ENCODE measurements at regions of chr9 and their contacts with region 1.

Region 1: GRCh38 chr9:128733256-128733655 is 9.3 kb upstream of the ZDHHC12 start:
- DNase-seq: peak; percentile 88
- H3K4me3 ChIP-seq: no peak overlapping the region
- H3K27ac ChIP-seq: no peak overlapping the region
- H3K4me1 ChIP-seq: no peaks in the 10 kb centered on the region
- H3K27me3 ChIP-seq: no peaks in the 10 kb centered on the region
- CTCF ChIP-seq: peak; percentile 75 to 85
- POLR2A ChIP-seq: no peak

Region 2: GRCh38 chr9:128786681-128787601 is 53.7 kb after region 1 on chr9 and contains the start of gene TBC1D13:
- CTCF ChIA-PET with region 1: interaction called, 6 read pairs
- POLR2A ChIA-PET with region 1: no interaction called
- dilution Hi-C with region 1: no loop called
- intact Hi-C with region 1: loop called (anchors 5 kb)
- DNase-seq: peak; percentile 82
- H3K4me3 ChIP-seq: peak within 1 kb of the TSS; percentile 50 to 94 (median 77)
- H3K27ac ChIP-seq: no peak within 1 kb of the TSS
- H3K4me1 ChIP-seq: peaks cover 11% of the 10 kb centered on the region
- H3K27me3 ChIP-seq: no peaks in the 10 kb centered on the region
- CTCF ChIP-seq: no peak
- POLR2A ChIP-seq: peak; percentile 66
- total RNA-seq, gene TBC1D13: 34.9 and 35.1 TPM in 2 replicates

Region 3: GRCh38 chr9:128947422-128948301 is 214.4 kb after region 1 on chr9 and contains the starts of genes DOLK and NUP188:
- CTCF ChIA-PET with region 1: interaction called, 6 read pairs
- POLR2A ChIA-PET with region 1: no interaction called
- dilution Hi-C with region 1: no loop called
- intact Hi-C with region 1: loop called (anchors 5 kb)
- DNase-seq: peak; percentile 93
- H3K4me3 ChIP-seq: peak within 1 kb of the TSS; percentile 78 to 89 (median 88)
- H3K27ac ChIP-seq: peak within 1 kb of the TSS; percentile 70
- H3K4me1 ChIP-seq: peaks cover 4% of the 10 kb centered on the region
- H3K27me3 ChIP-seq: no peaks in the 10 kb centered on the region
- CTCF ChIP-seq: no peak
- POLR2A ChIP-seq: peak; percentile 87
- total RNA-seq, gene DOLK: 18.8 and 22.3 TPM in 2 replicates
- total RNA-seq, gene NUP188: 62.1 and 66.2 TPM in 2 replicates

Region 4: DNA sequence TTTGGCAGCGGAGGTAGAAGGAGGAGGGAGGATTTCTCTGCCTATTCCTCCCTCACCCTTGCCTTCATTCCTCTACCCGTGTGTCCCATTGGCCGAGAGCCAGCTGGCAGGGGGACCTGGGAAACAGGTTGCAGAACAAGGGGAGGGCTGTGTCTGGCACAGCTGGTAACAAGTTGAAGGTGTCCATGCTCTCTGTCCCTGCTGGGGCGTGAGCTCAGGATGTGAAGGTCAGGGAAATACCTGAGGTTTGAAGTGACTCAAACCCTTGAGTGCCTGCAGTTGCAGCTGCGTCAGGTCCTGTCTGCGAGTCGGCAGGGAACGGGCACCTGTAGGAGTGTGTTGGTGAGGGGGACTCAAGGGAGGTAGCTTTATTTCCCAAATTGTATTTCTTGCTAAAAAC is 319.3 kb after region 1 on chr9:
- CTCF ChIA-PET with region 1: no interaction called
- POLR2A ChIA-PET with region 1: no interaction called
- dilution Hi-C with region 1: no loop called
- intact Hi-C with region 1: no loop called
- DNase-seq: no peak
- H3K4me3 ChIP-seq: no peak overlapping the region
- H3K27ac ChIP-seq: no peak overlapping the region
- H3K4me1 ChIP-seq: no peaks in the 10 kb centered on the region
- H3K27me3 ChIP-seq: no peaks in the 10 kb centered on the region
- CTCF ChIP-seq: no peak
- POLR2A ChIP-seq: no peak